IMR-90 (cell line): ENCODE measurements at regions of chr1 and their contacts with region 1.

Region 1: DNA sequence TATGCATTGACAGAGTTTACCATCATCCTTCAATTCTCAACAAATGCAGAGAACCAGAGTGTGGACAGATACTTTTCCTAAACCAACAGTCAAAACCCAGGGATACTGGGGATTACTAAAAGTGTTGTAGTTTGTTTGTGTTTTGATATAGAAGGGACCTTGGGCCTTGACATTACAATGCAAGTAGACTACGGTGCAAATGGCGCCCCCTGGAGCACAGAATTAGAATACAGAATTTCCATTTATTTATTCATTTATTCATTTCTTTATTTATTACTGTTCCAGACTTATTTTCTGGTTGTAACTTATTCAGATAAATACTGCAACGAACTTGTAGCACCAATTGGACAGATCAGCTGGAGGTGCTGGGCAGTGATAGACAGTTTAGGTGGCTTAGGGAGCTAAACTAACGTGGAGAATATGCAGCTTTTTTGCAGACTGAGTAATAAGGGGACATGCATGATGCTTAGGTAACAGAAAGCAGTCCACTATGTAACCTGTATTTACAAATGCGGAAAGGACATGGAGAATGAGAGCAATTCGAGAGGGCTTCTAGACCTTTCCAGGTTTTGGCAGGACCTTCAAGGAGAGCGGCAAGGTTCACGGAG is 42.6 kb downstream of the KIRREL1 start:
- DNase-seq: peak; percentile 68
- ATAC-seq: peak; percentile 40; the same call in 1 of the 2 replicates
- H3K4me3 ChIP-seq: no peak overlapping the region
- H3K27ac ChIP-seq: no peak overlapping the region
- H3K4me1 ChIP-seq: peaks cover 22% of the 10 kb centered on the region
- H3K27me3 ChIP-seq: no peaks in the 10 kb centered on the region
- CTCF ChIP-seq: peak; percentile 80
- POLR2A ChIP-seq: no peak
- RAD21 ChIP-seq: peak; percentile 77

Region 2: GRCh38 chr1:157992031-157992832 is 43.8 kb before region 1 on chr1:
- CTCF ChIA-PET with region 1: interaction called, 19 read pairs
- POLR2A ChIA-PET with region 1: no interaction called
- dilution Hi-C with region 1: no loop called
- in situ Hi-C with region 1: loop called (anchors 5 kb)
- intact Hi-C with region 1: loop called (anchors 1 kb)
- DNase-seq: peak; percentile 63
- ATAC-seq: peak; percentile 33
- H3K4me3 ChIP-seq: no peak overlapping the region
- H3K27ac ChIP-seq: peak overlapping the region; percentile 0; the same call in 1 of the 2 replicates
- H3K4me1 ChIP-seq: peaks cover 10% of the 10 kb centered on the region
- H3K27me3 ChIP-seq: peaks cover 21% of the 10 kb centered on the region
- CTCF ChIP-seq: peak; percentile 99
- POLR2A ChIP-seq: 0 out of 2 replicates have a peak, but pooled peaks have one; percentile 23
- RAD21 ChIP-seq: peak; percentile 98

Region 3: DNA sequence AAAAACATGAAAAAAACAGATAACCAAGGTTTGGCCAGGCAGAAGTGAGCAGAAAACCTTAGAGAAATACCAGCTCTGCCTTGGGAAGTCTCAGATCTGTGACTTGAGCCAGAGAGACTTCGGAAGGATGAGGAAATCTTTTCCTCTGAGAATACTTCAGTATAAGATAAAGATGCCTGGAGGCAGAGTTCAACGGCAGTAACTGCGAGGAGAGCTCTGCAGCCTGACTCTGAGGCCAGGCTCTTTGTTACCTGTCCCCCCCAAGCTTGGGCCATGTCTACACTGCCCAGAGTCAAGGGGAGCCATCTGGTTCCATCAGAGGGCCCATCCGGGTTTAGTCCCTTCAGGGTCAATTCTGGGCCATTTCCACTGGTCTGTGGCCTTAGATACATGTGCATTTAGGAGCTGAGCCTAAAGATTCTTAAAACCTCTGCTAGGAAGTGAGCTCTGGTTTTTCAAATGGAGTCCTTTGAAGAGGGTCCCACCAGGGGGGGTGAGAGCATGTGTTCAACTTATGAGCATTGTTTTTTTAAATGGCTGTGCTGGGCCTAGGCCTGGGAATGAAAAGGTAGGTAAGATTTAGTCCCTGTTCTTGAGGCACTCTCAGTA is 34.0 kb before region 1 on chr1:
- CTCF ChIA-PET with region 1: interaction called, 5 read pairs
- POLR2A ChIA-PET with region 1: no interaction called
- dilution Hi-C with region 1: no loop called
- in situ Hi-C with region 1: no loop called
- intact Hi-C with region 1: loop called (anchors 2 kb)
- DNase-seq: peak; percentile 51
- ATAC-seq: peak; percentile 47
- H3K4me3 ChIP-seq: no peak overlapping the region
- H3K27ac ChIP-seq: peak overlapping the region; percentile 93
- H3K4me1 ChIP-seq: peaks cover 54% of the 10 kb centered on the region
- H3K27me3 ChIP-seq: no peaks in the 10 kb centered on the region
- CTCF ChIP-seq: peak; percentile 33; the same call in 1 of the 2 replicates
- POLR2A ChIP-seq: no peak
- RAD21 ChIP-seq: peak; percentile 30; the same call in 1 of the 2 replicates

Region 4: GRCh38 chr1:158019171-158019868 is 16.8 kb before region 1 on chr1:
- CTCF ChIA-PET with region 1: interaction called, 3 read pairs
- POLR2A ChIA-PET with region 1: interaction called, 10 read pairs
- dilution Hi-C with region 1: no loop called
- in situ Hi-C with region 1: no loop called
- intact Hi-C with region 1: no loop called
- DNase-seq: peak; percentile 94
- ATAC-seq: peak; percentile 89
- H3K4me3 ChIP-seq: no peak overlapping the region
- H3K27ac ChIP-seq: peak overlapping the region; percentile 99
- H3K4me1 ChIP-seq: peaks cover 53% of the 10 kb centered on the region
- H3K27me3 ChIP-seq: no peaks in the 10 kb centered on the region
- CTCF ChIP-seq: 0 out of 2 replicates have a peak, but pooled peaks have one; percentile 6
- POLR2A ChIP-seq: no peak
- RAD21 ChIP-seq: peak; percentile 35; the same call in 1 of the 2 replicates

Region 5: GRCh38 chr1:158087320-158087927 is 51.3 kb after region 1 on chr1:
- CTCF ChIA-PET with region 1: no interaction called
- POLR2A ChIA-PET with region 1: no interaction called
- dilution Hi-C with region 1: no loop called
- in situ Hi-C with region 1: no loop called
- intact Hi-C with region 1: loop called (anchors 1 kb)
- DNase-seq: peak; percentile 77
- ATAC-seq: peak; percentile 95
- H3K4me3 ChIP-seq: no peak overlapping the region
- H3K27ac ChIP-seq: no peak overlapping the region
- H3K4me1 ChIP-seq: no peaks in the 10 kb centered on the region
- H3K27me3 ChIP-seq: no peaks in the 10 kb centered on the region
- CTCF ChIP-seq: peak; percentile 99
- POLR2A ChIP-seq: peak; percentile 43; the same call in 1 of the 2 replicates
- RAD21 ChIP-seq: peak; percentile 97

Region 6: DNA sequence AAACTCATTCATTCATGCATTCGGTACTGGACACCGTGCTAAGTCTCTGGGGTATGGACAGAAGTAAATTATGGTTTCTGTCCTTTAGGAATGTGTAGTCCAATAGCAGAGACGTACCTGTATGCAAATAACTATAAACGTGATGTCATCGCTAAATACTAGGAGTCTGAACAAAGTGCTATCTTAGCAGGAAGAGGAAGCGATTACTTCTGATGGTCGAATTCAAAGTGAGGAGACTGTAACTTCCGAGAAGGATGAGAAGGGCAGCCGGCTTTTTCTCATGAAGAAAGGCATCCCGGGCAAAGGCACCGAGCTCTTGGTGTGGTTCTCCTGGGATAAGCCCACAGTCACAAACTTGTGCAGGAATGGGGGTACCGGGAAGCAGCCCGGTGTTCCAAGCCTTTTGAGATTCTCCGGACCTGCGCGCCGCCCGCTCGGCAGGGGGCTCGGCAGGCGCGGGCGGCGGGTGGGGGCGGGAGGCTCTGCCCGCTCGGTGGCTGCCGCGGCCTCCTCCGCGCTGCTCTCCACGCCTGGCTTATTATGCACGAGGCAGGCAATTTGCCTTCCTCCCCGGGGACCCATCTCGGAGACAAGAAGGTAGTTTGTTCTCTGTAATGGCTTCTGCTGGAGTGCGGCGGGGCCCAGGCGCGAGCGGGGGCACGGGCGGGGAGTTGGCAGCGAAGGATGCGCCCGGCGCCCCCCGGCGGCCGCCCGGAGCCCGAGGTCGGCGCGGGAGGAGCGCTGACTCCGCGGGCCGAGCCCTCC is 77.1 kb after region 1 on chr1:
- CTCF ChIA-PET with region 1: no interaction called
- POLR2A ChIA-PET with region 1: no interaction called
- dilution Hi-C with region 1: no loop called
- in situ Hi-C with region 1: no loop called
- intact Hi-C with region 1: no loop called
- DNase-seq: peak; percentile 15
- ATAC-seq: peak; percentile 88
- H3K4me3 ChIP-seq: peak overlapping the region; percentile 73
- H3K27ac ChIP-seq: no peak overlapping the region
- H3K4me1 ChIP-seq: no peaks in the 10 kb centered on the region; the same call in 1 of the 2 replicates
- H3K27me3 ChIP-seq: peaks cover 27% of the 10 kb centered on the region
- CTCF ChIP-seq: peak; percentile 59
- POLR2A ChIP-seq: no peak
- RAD21 ChIP-seq: peak; percentile 43